Activated T-helper 1 cell treated with anti-CD3 and anti-CD28 coated beads, Interleukin-12 subunit alpha, Interleukin-12 subunit beta, Interleukin-2, Interleukin-4 antibody, amounts not matched to agents 30 ng/mL and 10 ng/mL and 1 ng/mL, durations not matched to agents 14 hours and 24 hours and 36 hours (primary cell): ENCODE measurements at regions of chr3 and their contacts with region 1.

Region 1: DNA sequence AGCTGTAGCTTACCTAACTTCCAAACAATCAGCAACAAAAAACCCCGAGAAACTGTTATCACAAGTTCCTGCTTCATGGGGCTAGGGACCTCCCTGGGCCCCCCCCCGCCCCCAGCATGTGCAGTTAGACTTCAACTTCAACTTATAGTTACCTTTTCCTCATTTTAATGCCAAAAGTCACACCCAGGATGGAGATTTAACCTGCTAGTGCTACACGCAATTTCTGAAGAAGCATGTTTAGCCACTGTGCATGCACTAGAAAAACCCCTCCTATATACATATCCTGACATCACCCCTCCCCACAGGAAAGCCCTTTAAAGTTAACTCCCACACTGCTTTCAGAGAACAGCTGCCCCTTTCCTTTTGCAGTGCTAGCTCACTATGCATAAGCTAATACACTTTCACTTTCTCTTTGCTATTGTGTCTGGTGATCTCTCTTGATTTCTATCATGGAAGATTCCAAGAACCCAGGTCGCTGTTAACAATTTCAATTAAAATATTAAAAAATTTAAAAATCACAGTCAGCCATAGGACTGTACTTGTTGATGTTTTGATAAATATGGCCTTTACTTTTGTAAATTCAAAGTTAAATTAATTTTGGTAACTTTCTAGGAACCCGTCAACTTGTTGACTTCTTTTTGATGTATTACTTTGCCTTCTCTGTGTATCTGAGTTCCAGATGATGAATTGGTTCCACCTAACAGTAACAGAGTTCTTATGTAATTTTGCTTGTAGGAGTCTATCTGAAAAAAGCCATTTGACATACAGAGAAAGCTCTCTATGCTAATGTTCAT is 75.2 kb upstream of the ACAD9 start:
- DNase-seq: peak; percentile 77
- H3K4me3 Mint-ChIP-seq: peak overlapping the region; percentile 66
- H3K27ac Mint-ChIP-seq: peak overlapping the region; percentile 95
- H3K4me1 Mint-ChIP-seq: peaks cover 82% of the 10 kb centered on the region
- H3K27me3 Mint-ChIP-seq: no peaks in the 10 kb centered on the region

Region 2: GRCh38 chr3:128153156-128154041 is 650.8 kb before region 1 on chr3 and contains the start of gene EEFSEC:
- intact Hi-C with region 1: loop called (anchors 5 kb)
- DNase-seq: peak; percentile 82
- H3K4me3 Mint-ChIP-seq: peak within 1 kb of the TSS; percentile 94
- H3K27ac Mint-ChIP-seq: peak within 1 kb of the TSS; percentile 98
- H3K4me1 Mint-ChIP-seq: peaks cover 31% of the 10 kb centered on the region
- H3K27me3 Mint-ChIP-seq: peaks cover 3% of the 10 kb centered on the region
- total RNA-seq, gene EEFSEC: 18.7 and 19.5 TPM in 2 replicates

Region 3: GRCh38 chr3:128650096-128651050 is 153.8 kb before region 1 on chr3 and contains the start of gene RPN1:
- intact Hi-C with region 1: loop called (anchors 1 kb)
- DNase-seq: peak; percentile 94
- H3K4me3 Mint-ChIP-seq: peak within 1 kb of the TSS; percentile 90
- H3K27ac Mint-ChIP-seq: peak within 1 kb of the TSS; percentile 92
- H3K4me1 Mint-ChIP-seq: peaks cover 26% of the 10 kb centered on the region
- H3K27me3 Mint-ChIP-seq: no peaks in the 10 kb centered on the region
- total RNA-seq, gene RPN1: 190 and 194 TPM in 2 replicates

Region 4: GRCh38 chr3:128734523-128735189 is 69.6 kb before region 1 on chr3:
- intact Hi-C with region 1: loop called (anchors 1 kb)
- DNase-seq: no peak
- H3K4me3 Mint-ChIP-seq: no peak overlapping the region
- H3K27ac Mint-ChIP-seq: peak overlapping the region; percentile 14
- H3K4me1 Mint-ChIP-seq: peaks cover 62% of the 10 kb centered on the region
- H3K27me3 Mint-ChIP-seq: no peaks in the 10 kb centered on the region

Region 5: DNA sequence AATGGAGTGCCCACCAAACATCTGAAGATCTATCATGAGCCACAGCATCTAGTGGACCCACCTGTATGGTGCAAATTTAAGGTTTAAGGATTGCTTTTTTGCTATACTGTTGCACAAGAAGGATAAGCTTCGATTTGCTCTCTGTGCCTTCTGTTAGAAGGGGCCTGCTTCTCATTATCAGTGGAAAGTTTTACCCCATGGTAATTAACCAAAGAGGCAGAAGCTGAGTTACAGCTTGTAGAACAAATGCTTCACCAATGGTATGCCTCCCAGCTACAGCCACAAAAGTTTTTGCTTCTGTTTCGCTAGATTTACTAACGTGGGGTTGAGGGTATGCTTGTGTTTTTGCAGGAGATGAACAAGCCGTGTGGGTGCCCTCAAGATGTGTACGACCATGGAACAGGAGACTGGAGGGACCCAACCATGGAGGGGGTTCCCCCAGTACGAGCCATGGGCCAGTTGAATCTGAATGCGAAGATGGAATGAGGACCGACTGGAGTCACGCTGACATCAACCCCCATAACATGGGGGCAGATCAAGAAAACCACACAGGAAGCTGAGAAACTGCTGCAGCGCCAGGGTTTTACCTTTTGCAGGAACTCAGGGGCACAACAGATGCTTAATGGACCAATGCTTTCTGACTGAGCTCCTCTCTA is 118.7 kb after region 1 on chr3:
- intact Hi-C with region 1: loop called (anchors 5 kb)
- DNase-seq: peak; percentile 46
- H3K4me3 Mint-ChIP-seq: peak overlapping the region; percentile 67
- H3K27ac Mint-ChIP-seq: peak overlapping the region; percentile 70
- H3K4me1 Mint-ChIP-seq: peaks cover 37% of the 10 kb centered on the region
- H3K27me3 Mint-ChIP-seq: peaks cover 4% of the 10 kb centered on the region

Region 6: DNA sequence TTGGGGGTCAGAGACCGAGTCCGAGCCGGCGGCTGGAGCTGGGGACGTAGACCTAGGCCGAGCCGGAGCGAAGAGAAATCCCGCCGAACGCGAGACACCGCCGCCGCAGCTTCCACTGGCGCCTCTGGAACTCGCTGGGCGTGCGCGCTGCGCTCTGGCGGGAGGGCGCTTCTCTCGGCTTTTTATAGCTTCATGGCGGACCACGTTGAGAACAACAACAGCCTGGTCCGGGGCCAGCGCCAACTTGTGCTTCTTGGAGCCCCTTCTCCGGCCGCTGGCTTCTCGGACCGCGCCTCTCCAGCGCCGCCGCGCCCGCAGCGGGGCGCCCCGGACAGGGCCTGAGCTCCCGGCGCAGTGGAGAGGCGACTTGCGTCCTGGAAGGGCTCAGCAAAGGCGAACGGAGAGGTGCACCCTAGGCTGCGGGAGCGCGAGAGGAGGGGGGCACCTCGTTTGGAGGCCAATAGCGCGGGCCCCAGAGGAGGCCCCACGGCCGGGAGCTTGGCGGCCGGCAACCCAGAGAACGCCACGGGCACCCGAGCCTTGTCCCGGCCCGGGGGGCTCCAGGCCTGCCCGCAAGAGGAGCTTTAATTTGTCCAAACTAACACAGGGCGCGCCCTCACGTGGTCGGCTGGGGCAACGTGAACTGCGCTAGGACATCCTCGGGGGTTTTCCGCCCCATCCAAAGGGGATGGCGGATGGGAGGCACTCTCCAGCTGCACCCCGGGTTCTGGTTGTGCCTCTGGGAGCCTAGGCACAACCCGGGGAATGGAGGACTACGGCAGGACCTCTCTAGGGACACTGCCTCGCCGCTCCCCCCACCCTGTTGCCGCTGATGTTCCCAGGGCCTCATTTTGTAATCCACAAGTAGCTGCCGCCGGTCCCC is 512.2 kb after region 1 on chr3:
- intact Hi-C with region 1: loop called (anchors 10 kb)
- DNase-seq: peak; percentile 88
- H3K4me3 Mint-ChIP-seq: peak overlapping the region; percentile 81
- H3K27ac Mint-ChIP-seq: peak overlapping the region; percentile 80
- H3K4me1 Mint-ChIP-seq: peaks cover 32% of the 10 kb centered on the region
- H3K27me3 Mint-ChIP-seq: no peaks in the 10 kb centered on the region